Gastrocnemius medialis (tissue), 4 donors: ENCODE measurements at regions of chr2 and their contacts with region 1.

Region 1: DNA sequence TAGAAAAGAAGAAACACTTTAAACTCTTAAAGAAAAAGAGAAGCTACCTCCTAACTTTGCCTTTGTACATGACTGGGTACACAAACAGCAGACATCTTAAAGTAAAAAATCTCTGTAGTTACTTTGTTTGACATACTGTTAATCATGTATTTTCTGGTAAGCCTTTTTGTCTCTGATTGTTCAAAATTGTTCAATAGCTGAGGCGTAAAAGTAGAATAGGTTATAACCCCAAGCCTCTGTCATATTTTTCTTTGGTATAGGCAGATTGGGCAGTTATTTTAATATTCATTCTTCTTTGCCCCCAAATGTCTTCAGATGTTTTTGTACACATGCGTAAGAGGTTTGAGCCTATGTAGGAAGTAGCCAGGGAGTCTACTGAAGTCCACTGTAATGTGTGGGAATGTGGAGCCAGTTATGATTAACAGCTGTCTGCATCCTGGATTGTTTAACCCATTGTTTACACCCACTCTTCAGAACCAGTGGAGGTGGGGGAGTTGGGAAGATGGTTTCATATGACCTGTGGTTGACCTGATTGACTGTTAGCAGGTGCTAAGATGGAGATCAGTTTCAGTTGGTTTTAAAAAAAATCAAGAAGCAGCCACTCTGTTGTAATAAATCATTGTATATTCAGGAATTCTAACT is 150.5 kb downstream of the TANC1 start:
- DNase-seq: no peak
- ATAC-seq: no peak
- H3K4me3 ChIP-seq: no peak overlapping the region
- H3K27ac ChIP-seq: no peak overlapping the region
- H3K4me1 ChIP-seq: peaks cover 0 to 5% of the 10 kb centered on the region in 2 donors
- H3K27me3 ChIP-seq: no peaks in the 10 kb centered on the region
- CTCF ChIP-seq: no peak
- POLR2A ChIP-seq: no peak

Region 2: DNA sequence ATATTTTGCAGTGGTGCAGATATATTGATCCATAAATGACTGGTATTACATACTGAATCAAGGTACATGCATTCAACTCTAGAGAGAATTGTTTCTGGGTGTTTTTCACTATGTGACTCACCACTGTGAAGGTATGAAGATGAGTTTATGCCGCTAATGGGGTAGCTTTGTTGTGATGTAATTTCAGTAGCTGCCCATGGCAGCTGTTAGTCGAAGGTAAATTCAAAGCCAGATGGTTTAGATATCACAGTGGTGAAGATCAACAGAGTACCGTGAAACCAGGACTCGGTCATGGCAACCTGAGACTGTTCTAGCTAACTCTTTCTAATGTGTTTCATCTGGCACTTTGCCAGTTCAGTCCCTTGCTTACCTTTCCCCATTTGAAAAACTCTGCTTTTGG is 611.8 kb before region 1 on chr2:
- in situ Hi-C with region 1: no loop called
- intact Hi-C with region 1: no loop called
- DNase-seq: no peak
- ATAC-seq: no peak
- H3K4me3 ChIP-seq: no peak overlapping the region
- H3K27ac ChIP-seq: no peak overlapping the region
- H3K4me1 ChIP-seq: peaks cover 10 to 16% of the 10 kb centered on the region in 2 donors
- H3K27me3 ChIP-seq: no peaks in the 10 kb centered on the region
- CTCF ChIP-seq: no peak
- POLR2A ChIP-seq: no peak

Region 3: GRCh38 chr2:158903711-158904443 is 215.1 kb before region 1 on chr2:
- in situ Hi-C with region 1: loop called (anchors 5 kb)
- intact Hi-C with region 1: loop called (anchors 1 kb)
- DNase-seq: no peak
- ATAC-seq: no peak
- H3K4me3 ChIP-seq: no peak overlapping the region
- H3K27ac ChIP-seq: no peak overlapping the region
- H3K4me1 ChIP-seq: no peaks in the 10 kb centered on the region
- H3K27me3 ChIP-seq: no peaks in the 10 kb centered on the region
- CTCF ChIP-seq: no peak
- POLR2A ChIP-seq: no peak

Region 4: GRCh38 chr2:159131914-159132281 is 12.9 kb after region 1 on chr2:
- in situ Hi-C with region 1: no loop called
- intact Hi-C with region 1: no loop called
- DNase-seq: no peak
- ATAC-seq: no peak
- H3K4me3 ChIP-seq: no peak overlapping the region
- H3K27ac ChIP-seq: no peak overlapping the region
- H3K4me1 ChIP-seq: peaks cover 7 to 21% of the 10 kb centered on the region in 2 donors
- H3K27me3 ChIP-seq: no peaks in the 10 kb centered on the region
- CTCF ChIP-seq: no peak
- POLR2A ChIP-seq: no peak

Region 5: DNA sequence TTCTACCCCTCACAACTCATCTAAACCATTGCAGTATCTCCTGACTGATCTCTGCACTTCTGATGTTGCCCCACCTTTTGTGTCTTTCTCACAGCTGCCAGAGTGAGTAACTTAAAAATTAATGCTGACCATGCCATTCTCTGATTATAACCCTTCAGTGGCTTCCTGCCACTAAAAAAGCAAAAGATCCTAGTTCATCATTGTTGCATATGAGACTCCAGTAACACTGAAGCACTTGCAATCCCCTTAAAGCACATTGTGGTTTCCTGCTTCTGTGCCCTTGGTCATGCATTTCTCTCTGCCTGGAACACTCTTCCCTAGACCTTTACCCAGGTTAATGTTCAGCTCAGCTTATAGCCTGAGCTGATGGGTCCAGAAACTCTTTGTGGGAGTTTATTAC is 262.6 kb after region 1 on chr2:
- in situ Hi-C with region 1: no loop called
- intact Hi-C with region 1: no loop called
- DNase-seq: no peak
- ATAC-seq: no peak
- H3K4me3 ChIP-seq: no peak overlapping the region
- H3K27ac ChIP-seq: no peak overlapping the region
- H3K4me1 ChIP-seq: no peaks in the 10 kb centered on the region
- H3K27me3 ChIP-seq: no peaks in the 10 kb centered on the region
- CTCF ChIP-seq: no peak
- POLR2A ChIP-seq: no peak

Region 6: GRCh38 chr2:160039166-160039903 is 920.4 kb after region 1 on chr2:
- in situ Hi-C with region 1: no loop called
- intact Hi-C with region 1: no loop called
- DNase-seq: no peak
- ATAC-seq: no peak
- H3K4me3 ChIP-seq: no peak overlapping the region
- H3K27ac ChIP-seq: no peak overlapping the region
- H3K4me1 ChIP-seq: peaks cover 0 to 4% of the 10 kb centered on the region in 2 donors
- H3K27me3 ChIP-seq: no peaks in the 10 kb centered on the region
- CTCF ChIP-seq: no peak
- POLR2A ChIP-seq: no peak